PC-9 (cell line): ENCODE measurements at regions of chr3 and their contacts with region 1.

Region 1: GRCh38 chr3:156509189-156510174 is 45.4 kb downstream of the SSR3 start:
- DNase-seq: peak; percentile 9 to 58
- H3K4me3 ChIP-seq: no peak overlapping the region
- H3K27ac ChIP-seq: no peak overlapping the region
- H3K4me1 ChIP-seq: peaks cover 11% of the 10 kb centered on the region
- H3K27me3 ChIP-seq: no peaks in the 10 kb centered on the region
- CTCF ChIP-seq: peak; percentile 88

Region 2: DNA sequence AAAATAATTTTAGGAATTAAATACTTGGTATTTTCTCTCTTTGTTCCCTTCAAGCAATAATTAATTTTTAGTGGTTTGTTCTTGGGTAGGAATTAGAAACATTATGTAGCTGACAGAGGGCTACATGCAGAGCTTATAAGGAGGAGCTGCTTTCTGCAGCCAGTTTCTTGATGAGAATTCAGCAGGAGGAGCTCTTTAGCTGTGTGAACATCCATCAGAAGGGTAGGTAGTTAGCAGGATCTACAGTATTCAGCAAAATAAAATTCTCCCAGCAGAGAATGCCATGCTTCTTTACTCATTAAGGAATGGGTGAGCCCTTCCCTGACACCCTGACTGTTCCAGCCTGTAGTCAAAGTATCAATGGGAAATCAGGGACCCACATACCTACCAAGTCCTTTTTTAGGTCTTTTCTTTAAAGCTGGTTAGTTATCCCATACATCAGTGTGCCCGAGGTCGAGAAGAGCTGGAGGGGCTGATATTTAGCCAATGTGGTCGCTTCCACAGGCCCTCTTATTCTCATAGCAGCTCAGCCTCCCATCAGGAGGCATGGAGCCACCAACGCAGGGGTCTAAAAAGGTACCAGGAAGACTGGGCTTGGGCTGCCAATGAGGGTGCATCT is 335.1 kb before region 1 on chr3:
- CTCF ChIA-PET with region 1: interaction called, 5 read pairs
- POLR2A ChIA-PET with region 1: no interaction called
- intact Hi-C with region 1: loop called (anchors 5 kb)
- DNase-seq: no peak
- H3K4me3 ChIP-seq: no peak overlapping the region
- H3K27ac ChIP-seq: no peak overlapping the region
- H3K4me1 ChIP-seq: no peaks in the 10 kb centered on the region
- H3K27me3 ChIP-seq: no peaks in the 10 kb centered on the region
- CTCF ChIP-seq: 0 out of 2 replicates have a peak, but pooled peaks have one; percentile 45

Region 3: GRCh38 chr3:156382458-156383346 is 126.8 kb before region 1 on chr3:
- CTCF ChIA-PET with region 1: no interaction called
- POLR2A ChIA-PET with region 1: no interaction called
- intact Hi-C with region 1: loop called (anchors 10 kb)
- DNase-seq: peak in 1 of 2 experiments; percentile 25
- H3K4me3 ChIP-seq: no peak overlapping the region
- H3K27ac ChIP-seq: no peak overlapping the region
- H3K4me1 ChIP-seq: no peaks in the 10 kb centered on the region
- H3K27me3 ChIP-seq: peaks cover 9% of the 10 kb centered on the region; the same call in 1 of the 2 replicates
- CTCF ChIP-seq: peak; percentile 82

Region 4: GRCh38 chr3:156449712-156450574 is 59.5 kb before region 1 on chr3:
- CTCF ChIA-PET with region 1: interaction called, 3 read pairs
- POLR2A ChIA-PET with region 1: no interaction called
- intact Hi-C with region 1: loop called (anchors 2 kb)
- DNase-seq: peak in 1 of 2 experiments; percentile 25
- H3K4me3 ChIP-seq: no peak overlapping the region
- H3K27ac ChIP-seq: no peak overlapping the region
- H3K4me1 ChIP-seq: no peaks in the 10 kb centered on the region
- H3K27me3 ChIP-seq: no peaks in the 10 kb centered on the region
- CTCF ChIP-seq: peak; percentile 65

Region 5: DNA sequence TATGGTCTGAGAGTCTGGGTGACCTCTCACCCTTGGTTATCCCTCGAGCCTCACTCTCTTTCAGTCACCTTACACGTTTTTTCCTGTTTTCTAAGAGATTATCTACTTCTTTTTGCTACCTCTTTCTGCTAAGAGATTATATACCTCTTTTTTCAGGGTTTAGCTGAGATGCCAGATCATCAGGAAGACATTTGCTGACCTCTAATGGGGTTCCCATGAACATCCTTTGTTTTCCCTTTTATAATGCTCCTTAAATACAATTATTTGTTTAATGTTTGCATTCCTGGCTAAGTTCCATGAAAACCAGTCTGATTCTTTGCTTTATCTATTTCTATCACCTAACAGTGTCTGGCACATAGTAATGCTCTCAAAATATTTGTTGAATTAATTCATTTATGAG is 356.2 kb after region 1 on chr3:
- CTCF ChIA-PET with region 1: no interaction called
- POLR2A ChIA-PET with region 1: no interaction called
- intact Hi-C with region 1: no loop called
- DNase-seq: no peak
- H3K4me3 ChIP-seq: no peak overlapping the region
- H3K27ac ChIP-seq: no peak overlapping the region
- H3K4me1 ChIP-seq: peaks cover 5% of the 10 kb centered on the region; the same call in 1 of the 2 replicates
- H3K27me3 ChIP-seq: no peaks in the 10 kb centered on the region
- CTCF ChIP-seq: no peak